AG04450 (cell line): ENCODE measurements at regions of chr15 and their contacts with region 1.

Region 1: GRCh38 chr15:65824031-65824743 is 32.1 kb upstream of the DENND4A start:
- DNase-seq: no peak
- H3K4me3 ChIP-seq: no peak overlapping the region
- H3K27ac ChIP-seq: no peak overlapping the region
- H3K27me3 ChIP-seq: no peaks in the 10 kb centered on the region
- CTCF ChIP-seq: peak; percentile 84

Region 2: GRCh38 chr15:65812916-65813315 is 11.3 kb before region 1 on chr15:
- CTCF ChIA-PET with region 1: interaction called, 10 read pairs
- POLR2A ChIA-PET with region 1: no interaction called
- DNase-seq: no peak
- H3K4me3 ChIP-seq: no peak overlapping the region
- H3K27ac ChIP-seq: no peak overlapping the region
- H3K27me3 ChIP-seq: no peaks in the 10 kb centered on the region
- CTCF ChIP-seq: no peak

Region 3: DNA sequence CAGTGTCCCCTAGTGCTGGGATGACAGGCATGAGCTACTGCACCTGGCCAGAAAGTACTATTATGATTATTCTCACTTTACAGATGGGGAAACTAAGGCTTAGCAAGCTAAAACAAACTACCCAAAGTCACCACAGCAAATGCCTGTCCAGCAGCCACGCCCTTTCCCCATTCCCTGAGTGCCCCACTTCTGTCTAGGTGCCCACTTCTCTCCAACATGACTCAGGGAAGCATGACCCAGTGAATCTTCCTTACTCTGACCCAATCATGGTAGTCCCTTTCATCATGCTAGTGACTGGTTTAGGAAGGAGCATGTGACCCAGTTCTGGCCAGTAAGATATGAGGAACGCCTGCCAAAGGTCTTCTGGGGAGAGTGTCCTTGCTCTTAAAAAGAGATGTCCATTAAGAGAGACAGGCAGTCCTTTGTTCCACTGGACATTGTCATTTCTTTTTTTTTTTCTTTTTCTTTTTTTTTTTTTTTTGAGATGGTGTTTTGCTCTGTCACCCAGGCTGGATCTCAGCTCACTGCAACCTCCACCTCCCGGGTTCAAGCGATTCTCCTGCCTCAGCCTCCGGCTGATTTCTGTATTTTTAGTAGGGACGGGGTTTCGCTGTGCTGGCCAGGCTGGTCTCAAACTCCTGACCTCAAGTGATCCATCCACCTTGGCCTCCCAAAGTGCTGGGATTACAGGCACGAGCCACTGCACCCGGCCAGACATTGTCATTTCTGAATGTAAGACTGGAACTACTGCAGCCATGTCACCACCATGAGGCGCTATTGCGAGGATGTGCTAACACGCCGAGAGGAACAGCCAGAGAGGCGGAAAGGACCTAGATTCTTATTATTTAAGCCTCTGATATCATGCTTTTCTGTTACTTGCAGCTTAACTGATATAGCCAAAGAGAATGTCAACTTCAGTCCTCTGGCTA is 409.6 kb after region 1 on chr15:
- CTCF ChIA-PET with region 1: no interaction called
- POLR2A ChIA-PET with region 1: no interaction called
- DNase-seq: no peak
- H3K4me3 ChIP-seq: no peak overlapping the region
- H3K27ac ChIP-seq: no peak overlapping the region
- H3K27me3 ChIP-seq: peaks cover 17% of the 10 kb centered on the region
- CTCF ChIP-seq: no peak

Region 4: DNA sequence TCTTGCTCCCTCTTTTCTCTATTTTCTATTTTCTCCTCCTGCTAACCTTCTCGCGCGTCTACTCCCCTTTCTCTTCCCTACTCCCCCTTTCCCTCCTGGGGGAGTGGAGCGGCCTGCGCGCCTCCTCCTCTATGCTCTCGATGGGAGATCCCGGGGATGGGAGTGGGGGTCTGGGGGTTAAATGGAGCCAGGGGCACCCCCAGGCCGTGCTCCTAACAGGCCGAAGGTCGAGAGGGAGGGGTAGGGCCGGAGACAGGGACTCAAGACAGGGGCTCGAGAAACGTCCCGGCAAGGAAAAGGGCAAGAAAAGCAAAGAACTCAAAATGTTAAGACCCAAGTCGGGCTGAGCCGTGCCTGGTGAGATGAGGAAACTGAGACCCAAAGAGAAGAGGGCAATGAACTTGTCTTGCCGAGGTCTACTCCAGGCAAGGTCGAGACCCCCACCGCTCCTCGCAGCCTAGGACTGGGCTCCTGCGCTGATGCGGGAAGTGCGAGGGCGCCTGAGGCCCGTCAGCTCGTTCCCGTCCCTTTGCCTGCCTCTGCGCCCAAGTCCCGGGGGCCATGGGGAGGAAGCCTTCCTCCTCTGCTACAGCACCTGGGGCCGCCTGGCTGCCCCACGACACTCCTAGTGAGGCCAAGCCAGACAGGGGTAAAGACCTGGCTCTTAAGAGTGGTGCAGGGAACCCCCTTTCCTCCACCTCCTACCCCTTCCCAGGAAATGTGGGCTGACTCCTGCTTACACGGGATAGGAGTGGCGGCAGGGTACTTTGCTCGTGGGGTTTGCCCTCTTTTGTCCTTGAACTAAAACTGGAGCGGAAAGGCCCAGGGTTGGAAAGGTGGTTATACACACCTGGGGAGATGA is 430.1 kb after region 1 on chr15:
- CTCF ChIA-PET with region 1: no interaction called
- POLR2A ChIA-PET with region 1: no interaction called
- DNase-seq: no peak
- H3K4me3 ChIP-seq: peak overlapping the region; percentile 45
- H3K27ac ChIP-seq: no peak overlapping the region
- H3K27me3 ChIP-seq: peaks cover 74% of the 10 kb centered on the region
- CTCF ChIP-seq: no peak